Activated T-helper 1 cell treated with anti-CD3 and anti-CD28 coated beads, Interleukin-12 subunit alpha, Interleukin-12 subunit beta, Interleukin-2, Interleukin-4 antibody, amounts not matched to agents 30 ng/mL and 10 ng/mL and 1 ng/mL, durations not matched to agents 14 hours and 24 hours and 36 hours (primary cell): ENCODE measurements at regions of chr3 and their contacts with region 1.

Region 1: GRCh38 chr3:23916886-23917678 is at the starts of genes NKIRAS1 and RPL15:
- DNase-seq: peak; percentile 96
- H3K4me3 Mint-ChIP-seq: peak within 1 kb of the TSS; percentile 99
- H3K27ac Mint-ChIP-seq: peak within 1 kb of the TSS; percentile 97
- H3K4me1 Mint-ChIP-seq: peaks cover 58% of the 10 kb centered on the region
- H3K27me3 Mint-ChIP-seq: peaks cover 8% of the 10 kb centered on the region
- total RNA-seq, gene NKIRAS1: 3.9 and 4.5 TPM in 2 replicates
- total RNA-seq, gene RPL15: 1,696 and 1,756 TPM in 2 replicates

Region 2: GRCh38 chr3:23442598-23443383 is 474.3 kb before region 1 on chr3:
- intact Hi-C with region 1: loop called (anchors 5 kb)
- DNase-seq: no peak
- H3K4me3 Mint-ChIP-seq: no peak overlapping the region
- H3K27ac Mint-ChIP-seq: no peak overlapping the region
- H3K4me1 Mint-ChIP-seq: peaks cover 32% of the 10 kb centered on the region
- H3K27me3 Mint-ChIP-seq: peaks cover 13% of the 10 kb centered on the region

Region 3: GRCh38 chr3:23888617-23889228 is 28.4 kb before region 1 on chr3:
- intact Hi-C with region 1: loop called (anchors 2 kb)
- DNase-seq: no peak
- H3K4me3 Mint-ChIP-seq: no peak overlapping the region
- H3K27ac Mint-ChIP-seq: no peak overlapping the region
- H3K4me1 Mint-ChIP-seq: no peaks in the 10 kb centered on the region
- H3K27me3 Mint-ChIP-seq: no peaks in the 10 kb centered on the region

Region 4: DNA sequence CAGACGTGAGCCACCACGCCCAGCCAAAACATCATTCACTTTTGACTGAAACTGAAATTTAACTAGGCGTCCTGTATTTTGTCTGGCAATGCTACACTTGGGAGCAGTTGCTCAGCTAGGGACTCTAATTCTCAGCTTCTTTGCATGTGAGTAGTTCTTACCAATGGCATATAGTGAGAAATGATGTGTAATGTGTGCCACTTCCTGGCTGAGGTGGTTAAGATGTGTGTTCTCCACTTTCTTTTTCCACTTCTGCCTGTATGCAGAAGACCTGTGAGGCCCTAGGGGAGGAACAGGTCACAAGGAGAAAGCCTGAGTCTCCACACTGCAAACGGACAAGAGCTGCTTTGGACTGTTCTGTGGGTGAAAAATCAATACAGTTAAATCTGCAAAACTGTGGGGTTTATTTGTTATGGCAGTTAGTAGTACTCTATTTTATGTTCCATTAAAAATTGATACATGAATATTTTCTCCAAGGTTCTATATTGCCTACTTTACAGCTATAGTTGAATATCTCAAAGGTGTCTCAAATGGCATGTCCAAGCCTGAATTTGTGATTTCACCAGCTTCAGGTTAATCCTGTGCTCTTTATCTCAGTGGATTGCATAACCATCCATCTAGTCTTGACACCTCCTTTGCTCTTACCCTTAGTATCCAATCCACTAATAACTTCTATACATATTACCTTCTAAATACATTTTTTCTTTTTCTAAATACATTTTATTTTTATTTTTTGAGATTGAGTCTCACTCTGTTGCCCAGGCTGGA is 87.3 kb after region 1 on chr3:
- intact Hi-C with region 1: loop called (anchors 1 kb)
- DNase-seq: no peak
- H3K4me3 Mint-ChIP-seq: no peak overlapping the region
- H3K27ac Mint-ChIP-seq: no peak overlapping the region
- H3K4me1 Mint-ChIP-seq: peaks cover 6% of the 10 kb centered on the region
- H3K27me3 Mint-ChIP-seq: peaks cover 11% of the 10 kb centered on the region

Region 5: DNA sequence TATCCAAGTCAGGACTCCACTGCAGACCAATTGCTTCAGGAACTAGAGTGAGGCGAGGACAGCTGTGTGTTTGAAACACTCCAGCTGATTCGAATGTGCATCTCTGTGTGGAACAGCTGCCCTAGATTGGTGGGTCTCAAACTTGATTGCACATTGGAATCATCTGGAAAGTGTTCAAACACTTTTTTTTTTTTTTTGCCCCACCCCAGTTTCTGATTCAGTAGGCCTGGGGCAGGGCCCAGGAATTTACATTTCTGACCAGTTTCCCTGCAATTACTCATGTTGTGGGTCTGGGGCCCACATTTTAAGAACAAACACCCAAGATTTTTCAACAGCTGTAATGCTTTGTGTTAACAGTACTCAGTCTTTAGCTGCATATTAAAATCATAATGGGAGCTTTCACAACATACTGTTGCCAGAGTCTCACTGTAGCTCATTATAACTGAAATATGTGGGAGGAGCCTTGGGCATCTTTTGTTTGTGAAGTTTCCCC is 184.6 kb after region 1 on chr3:
- intact Hi-C with region 1: no loop called
- DNase-seq: no peak
- H3K4me3 Mint-ChIP-seq: no peak overlapping the region
- H3K27ac Mint-ChIP-seq: no peak overlapping the region
- H3K4me1 Mint-ChIP-seq: no peaks in the 10 kb centered on the region
- H3K27me3 Mint-ChIP-seq: peaks cover 1% of the 10 kb centered on the region

Region 6: DNA sequence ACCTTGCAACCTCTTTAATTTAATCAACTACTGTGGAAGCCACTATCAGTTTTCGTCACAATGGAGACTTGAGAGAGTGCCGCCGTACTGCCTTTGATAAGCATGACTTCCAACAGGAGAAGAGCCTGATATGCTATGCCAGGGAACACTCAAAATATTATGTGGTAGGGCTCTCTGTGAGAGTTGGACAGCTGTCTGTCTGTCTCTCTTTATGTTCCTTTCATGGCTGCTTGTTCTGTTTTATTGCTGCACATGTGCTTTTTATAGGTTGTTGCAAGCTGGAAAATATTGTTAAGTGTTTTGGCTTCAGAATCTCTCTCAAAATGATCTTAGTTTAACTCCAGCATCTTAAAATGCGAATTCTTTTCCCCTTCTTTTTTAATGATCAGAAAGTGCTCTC is 1261.6 kb after region 1 on chr3:
- intact Hi-C with region 1: no loop called
- DNase-seq: no peak
- H3K4me3 Mint-ChIP-seq: no peak overlapping the region
- H3K27ac Mint-ChIP-seq: no peak overlapping the region
- H3K4me1 Mint-ChIP-seq: no peaks in the 10 kb centered on the region
- H3K27me3 Mint-ChIP-seq: no peaks in the 10 kb centered on the region

Region 7: DNA sequence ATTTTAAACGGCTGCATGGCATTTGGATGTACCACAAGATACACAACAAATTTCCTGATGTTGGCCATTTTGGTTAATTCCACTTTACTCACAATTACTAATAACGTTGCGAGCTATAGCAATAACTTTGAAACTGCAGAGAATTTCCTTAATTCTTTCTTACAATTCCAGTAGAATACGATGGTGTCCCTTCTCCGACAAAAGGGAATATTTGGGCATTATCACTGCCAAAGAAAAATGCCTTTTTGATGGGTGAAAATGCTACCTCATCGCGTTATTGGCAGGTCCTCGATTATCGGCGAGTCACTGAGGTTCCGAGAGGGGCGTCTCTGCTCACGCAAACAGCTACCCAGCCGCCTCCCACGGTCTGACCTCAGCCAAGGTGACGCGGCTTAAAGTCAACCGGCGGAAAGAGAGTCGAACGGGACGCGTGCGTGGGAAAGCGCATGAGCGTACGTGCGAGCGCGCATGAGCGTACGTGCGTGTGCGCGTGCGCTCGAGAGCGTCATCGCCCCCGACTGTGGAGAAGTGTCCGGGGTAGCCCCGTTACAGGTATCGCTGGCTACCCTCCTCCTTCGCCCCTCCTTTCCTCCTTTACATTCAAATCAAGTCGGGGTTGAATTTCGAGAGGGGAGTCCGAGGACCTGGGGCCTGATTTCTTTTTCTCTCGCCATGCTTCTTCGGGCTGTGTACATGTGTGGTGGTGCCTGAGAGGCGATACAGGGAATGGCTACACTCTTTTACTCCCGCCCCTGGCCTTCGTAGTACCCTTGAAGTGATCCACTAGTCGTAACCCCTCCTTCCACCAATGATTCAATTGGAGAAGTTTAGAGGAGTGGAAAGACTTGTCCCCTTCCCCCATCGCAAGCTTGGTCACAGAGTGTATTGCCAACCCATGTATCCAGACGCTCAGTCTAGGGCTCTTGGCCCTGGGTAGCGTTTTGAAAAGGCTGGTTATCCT is 1872.8 kb after region 1 on chr3 and contains the start of gene OXSM:
- intact Hi-C with region 1: loop called (anchors 10 kb)
- DNase-seq: peak; percentile 90
- H3K4me3 Mint-ChIP-seq: peak within 1 kb of the TSS; percentile 95
- H3K27ac Mint-ChIP-seq: peak within 1 kb of the TSS; percentile 99
- H3K4me1 Mint-ChIP-seq: peaks cover 50% of the 10 kb centered on the region
- H3K27me3 Mint-ChIP-seq: no peaks in the 10 kb centered on the region
- total RNA-seq, gene OXSM: 15.2 and 15.4 TPM in 2 replicates